Mammary epithelial cell (primary cell): ENCODE measurements at regions of chr18 and their contacts with region 1.

Region 1: GRCh38 chr18:9913526-9914333 is at the start of gene VAPA:
- DNase-seq: peak; percentile 97
- H3K4me3 ChIP-seq: peak within 1 kb of the TSS; percentile 94 to 99 (median 95)
- H3K27ac ChIP-seq: peak within 1 kb of the TSS; percentile 98
- H3K4me1 ChIP-seq: peaks cover 27% of the 10 kb centered on the region
- H3K27me3 ChIP-seq: no peaks in the 10 kb centered on the region
- CTCF ChIP-seq: no peak
- total RNA-seq, gene VAPA: 199 to 223 TPM

Region 2: GRCh38 chr18:9575558-9575957 is 338.2 kb before region 1 on chr18:
- CTCF ChIA-PET with region 1: no interaction called
- dilution Hi-C with region 1: no loop called
- in situ Hi-C with region 1: loop called (anchors 25 kb)
- intact Hi-C with region 1: loop called (anchors 10 kb)
- DNase-seq: peak; percentile 74
- H3K4me3 ChIP-seq: no peak overlapping the region
- H3K27ac ChIP-seq: peak overlapping the region; percentile 34
- H3K4me1 ChIP-seq: peaks cover 5% of the 10 kb centered on the region
- H3K27me3 ChIP-seq: no peaks in the 10 kb centered on the region
- CTCF ChIP-seq: peak; percentile 89 to 99

Region 3: DNA sequence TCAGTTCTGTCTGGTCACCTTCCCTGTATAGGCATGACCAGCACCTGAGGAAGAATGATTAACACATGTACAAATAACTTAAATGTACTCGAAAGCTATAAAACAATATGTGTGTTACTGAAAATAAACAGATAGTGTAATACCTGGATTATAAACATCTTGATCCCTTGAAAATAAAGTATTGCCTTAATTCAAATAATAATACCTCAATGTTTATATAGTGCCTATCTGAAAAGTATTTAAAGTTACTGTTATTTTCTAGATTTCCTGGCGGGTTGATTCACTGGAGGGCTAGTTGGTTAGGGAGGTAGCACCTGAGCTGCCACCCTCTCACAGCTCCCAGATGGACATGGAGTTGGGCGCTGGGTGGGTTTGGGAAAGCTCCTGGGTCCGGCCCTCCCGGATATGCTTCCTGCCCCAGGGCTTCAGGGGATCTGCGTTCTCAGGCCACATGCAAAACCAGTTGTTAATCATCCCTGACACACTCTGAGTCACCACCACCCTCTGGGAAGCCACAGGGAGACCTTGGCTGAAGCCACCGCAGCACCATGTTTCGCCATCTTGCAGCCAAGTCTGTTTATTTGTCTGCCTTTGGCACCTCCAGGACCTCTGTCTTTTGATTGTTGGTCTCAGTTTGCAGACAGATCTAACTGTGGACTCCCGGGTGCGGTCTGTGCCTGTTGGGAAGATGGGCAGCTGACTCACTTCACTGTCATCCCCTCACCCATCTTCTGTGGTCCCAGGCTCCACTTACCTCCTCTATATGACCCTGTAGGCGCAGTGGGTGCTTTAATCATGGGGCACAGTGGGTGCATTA is 170.3 kb before region 1 on chr18:
- CTCF ChIA-PET with region 1: no interaction called
- dilution Hi-C with region 1: no loop called
- in situ Hi-C with region 1: no loop called
- intact Hi-C with region 1: loop called (anchors 5 kb)
- DNase-seq: peak; percentile 95
- H3K4me3 ChIP-seq: peak overlapping the region in 1 of 3 experiments; percentile 14
- H3K27ac ChIP-seq: peak overlapping the region; percentile 78
- H3K4me1 ChIP-seq: peaks cover 32% of the 10 kb centered on the region
- H3K27me3 ChIP-seq: no peaks in the 10 kb centered on the region
- CTCF ChIP-seq: no peak

Region 4: DNA sequence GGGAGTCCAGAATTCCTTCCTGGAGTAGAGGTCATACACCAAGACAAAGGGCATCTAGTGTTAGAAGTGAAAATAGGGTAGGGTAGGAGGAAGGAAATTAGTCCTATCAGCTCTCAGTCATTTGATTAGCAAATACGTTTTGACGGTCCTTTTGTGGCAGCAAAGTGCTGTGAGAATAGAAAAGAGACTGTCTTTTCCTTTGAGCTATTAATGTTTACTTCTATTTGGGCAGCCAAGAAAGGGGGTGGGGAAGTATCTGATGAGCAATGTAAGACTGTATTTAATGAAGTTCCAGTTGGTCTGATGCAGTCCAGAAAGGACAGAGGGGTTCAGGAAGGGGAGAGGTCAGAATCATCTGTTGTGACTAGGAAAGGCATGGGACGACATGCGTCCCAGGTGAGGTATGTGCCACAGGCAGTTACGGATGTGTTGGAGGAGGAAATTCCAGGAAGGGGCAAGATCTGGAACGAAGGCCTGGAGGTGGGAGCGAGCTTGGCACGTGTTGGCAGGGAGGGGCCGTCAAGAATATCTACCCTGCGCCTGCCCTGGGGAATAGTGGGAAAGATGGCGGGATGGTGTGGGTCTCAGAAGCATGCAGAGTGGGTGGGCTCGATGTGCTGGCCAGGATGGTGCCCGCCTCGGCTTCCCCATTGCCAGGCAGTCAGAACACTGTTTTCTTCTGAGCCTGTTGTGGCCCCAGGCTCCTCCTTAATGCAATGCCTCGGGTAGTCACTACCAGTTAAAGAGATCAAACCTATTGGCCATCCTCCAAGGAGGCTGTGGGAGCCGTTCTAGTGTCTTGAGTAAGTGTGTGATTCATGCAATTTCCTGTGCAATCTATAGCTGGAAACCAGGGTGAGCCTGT is 85.9 kb before region 1 on chr18:
- CTCF ChIA-PET with region 1: no interaction called
- dilution Hi-C with region 1: no loop called
- in situ Hi-C with region 1: no loop called
- intact Hi-C with region 1: loop called (anchors 2 kb)
- DNase-seq: peak; percentile 98
- H3K4me3 ChIP-seq: peak overlapping the region in 2 of 3 experiments; percentile 40 to 41
- H3K27ac ChIP-seq: peak overlapping the region; percentile 77
- H3K4me1 ChIP-seq: peaks cover 54% of the 10 kb centered on the region
- H3K27me3 ChIP-seq: no peaks in the 10 kb centered on the region
- CTCF ChIP-seq: no peak

Region 5: GRCh38 chr18:9869715-9870430 is 43.9 kb before region 1 on chr18:
- CTCF ChIA-PET with region 1: no interaction called
- dilution Hi-C with region 1: loop called (anchors 5 kb)
- in situ Hi-C with region 1: no loop called
- intact Hi-C with region 1: loop called (anchors 2 kb)
- DNase-seq: peak; percentile 63
- H3K4me3 ChIP-seq: no peak overlapping the region
- H3K27ac ChIP-seq: no peak overlapping the region
- H3K4me1 ChIP-seq: peaks cover 26% of the 10 kb centered on the region
- H3K27me3 ChIP-seq: no peaks in the 10 kb centered on the region
- CTCF ChIP-seq: no peak

Region 6: DNA sequence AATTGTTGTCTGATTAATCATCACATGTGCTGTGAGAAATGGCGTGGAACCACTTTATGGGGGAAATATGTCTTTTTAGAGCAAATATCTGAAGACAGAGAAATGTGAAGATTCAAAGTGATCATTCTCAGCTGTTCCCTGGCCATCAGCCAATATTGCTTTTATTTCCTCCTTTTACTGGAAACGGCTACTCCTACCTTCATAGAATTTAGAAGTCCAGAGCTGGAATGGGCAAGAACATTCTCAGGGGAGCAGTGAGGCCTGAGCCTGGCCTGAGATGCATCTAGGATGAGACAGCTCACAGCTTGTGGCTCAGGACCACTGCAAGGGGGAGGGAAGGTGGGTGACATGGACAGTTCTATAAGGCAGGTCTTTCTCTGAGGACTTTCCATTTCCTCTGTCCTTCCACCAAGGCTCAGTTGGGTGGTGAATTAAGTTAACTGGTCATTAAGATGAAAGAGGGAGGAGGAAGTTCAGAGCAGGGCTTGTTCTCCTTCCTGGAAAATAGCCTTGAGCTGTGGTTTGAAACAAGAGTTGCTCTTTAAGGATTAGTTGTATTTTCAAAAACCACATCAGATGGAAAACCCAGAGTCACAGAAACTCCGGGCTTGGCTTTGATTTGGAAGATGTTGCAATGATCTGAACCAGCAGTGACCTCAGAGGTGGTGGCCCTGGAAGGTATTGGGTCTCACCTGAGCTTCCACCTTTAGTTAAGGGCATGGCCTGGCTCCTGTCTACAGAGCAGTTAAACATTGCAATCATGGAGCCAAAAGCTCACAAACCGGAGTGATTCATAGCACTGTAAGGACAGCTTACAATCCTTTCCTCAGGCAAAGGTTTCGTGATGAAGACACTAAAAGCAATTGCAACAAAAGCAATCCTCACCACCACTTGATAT is 144.4 kb after region 1 on chr18:
- CTCF ChIA-PET with region 1: no interaction called
- dilution Hi-C with region 1: no loop called
- in situ Hi-C with region 1: no loop called
- intact Hi-C with region 1: no loop called
- DNase-seq: peak; percentile 82
- H3K4me3 ChIP-seq: no peak overlapping the region
- H3K27ac ChIP-seq: no peak overlapping the region
- H3K4me1 ChIP-seq: peaks cover 16% of the 10 kb centered on the region
- H3K27me3 ChIP-seq: no peaks in the 10 kb centered on the region
- CTCF ChIP-seq: no peak

Region 7: GRCh38 chr18:10101729-10102128 is 188.0 kb after region 1 on chr18:
- CTCF ChIA-PET with region 1: no interaction called
- dilution Hi-C with region 1: no loop called
- in situ Hi-C with region 1: no loop called
- intact Hi-C with region 1: no loop called
- DNase-seq: no peak
- H3K4me3 ChIP-seq: no peak overlapping the region
- H3K27ac ChIP-seq: no peak overlapping the region
- H3K4me1 ChIP-seq: no peaks in the 10 kb centered on the region
- H3K27me3 ChIP-seq: peaks cover 3% of the 10 kb centered on the region
- CTCF ChIP-seq: no peak

Region 8: DNA sequence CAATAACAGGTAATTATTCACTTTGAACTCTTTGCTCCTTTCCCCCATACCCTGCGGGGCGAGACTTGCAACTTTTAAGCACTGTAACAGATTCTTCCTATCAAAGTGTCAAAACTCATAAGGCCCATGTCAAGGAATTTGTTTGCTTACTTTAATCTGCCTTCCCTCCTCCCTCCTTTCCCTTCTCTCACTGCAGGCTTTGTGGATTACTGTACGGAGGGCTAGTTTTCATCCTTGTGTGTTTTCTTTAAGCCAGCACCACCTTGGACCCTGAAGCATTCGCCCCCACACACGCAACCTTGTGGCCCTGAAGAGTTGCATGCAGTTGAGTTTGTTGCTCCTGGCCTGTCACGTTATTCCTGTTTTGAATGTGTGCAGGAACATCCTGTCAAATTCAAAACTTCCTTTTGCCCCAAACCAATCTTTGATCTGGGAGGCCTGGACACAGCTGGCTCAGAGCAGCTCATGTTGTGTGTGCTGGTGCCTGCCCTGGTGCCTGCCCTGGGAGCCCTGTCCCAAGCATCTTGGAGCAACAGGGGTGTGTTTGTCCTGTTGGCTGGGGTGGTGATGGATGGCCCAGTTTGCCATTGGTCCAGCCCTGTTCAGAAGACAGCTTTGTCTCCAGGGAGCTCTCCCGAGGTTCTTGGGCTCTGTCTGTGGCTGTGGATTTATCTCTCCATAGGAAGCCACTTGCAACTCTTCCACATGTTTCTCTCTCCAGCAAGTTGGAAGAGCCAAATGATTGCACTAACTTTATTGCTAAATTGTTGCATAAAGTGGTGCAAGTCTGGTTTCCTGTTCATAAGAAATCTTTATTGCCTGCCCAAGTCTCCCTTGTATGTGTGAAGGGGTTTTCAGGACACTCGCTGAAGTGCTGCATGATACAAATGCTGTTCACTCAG is 199.6 kb after region 1 on chr18:
- CTCF ChIA-PET with region 1: no interaction called
- dilution Hi-C with region 1: no loop called
- in situ Hi-C with region 1: no loop called
- intact Hi-C with region 1: no loop called
- DNase-seq: no peak
- H3K4me3 ChIP-seq: no peak overlapping the region
- H3K27ac ChIP-seq: no peak overlapping the region
- H3K4me1 ChIP-seq: no peaks in the 10 kb centered on the region
- H3K27me3 ChIP-seq: no peaks in the 10 kb centered on the region
- CTCF ChIP-seq: no peak

Region 9: DNA sequence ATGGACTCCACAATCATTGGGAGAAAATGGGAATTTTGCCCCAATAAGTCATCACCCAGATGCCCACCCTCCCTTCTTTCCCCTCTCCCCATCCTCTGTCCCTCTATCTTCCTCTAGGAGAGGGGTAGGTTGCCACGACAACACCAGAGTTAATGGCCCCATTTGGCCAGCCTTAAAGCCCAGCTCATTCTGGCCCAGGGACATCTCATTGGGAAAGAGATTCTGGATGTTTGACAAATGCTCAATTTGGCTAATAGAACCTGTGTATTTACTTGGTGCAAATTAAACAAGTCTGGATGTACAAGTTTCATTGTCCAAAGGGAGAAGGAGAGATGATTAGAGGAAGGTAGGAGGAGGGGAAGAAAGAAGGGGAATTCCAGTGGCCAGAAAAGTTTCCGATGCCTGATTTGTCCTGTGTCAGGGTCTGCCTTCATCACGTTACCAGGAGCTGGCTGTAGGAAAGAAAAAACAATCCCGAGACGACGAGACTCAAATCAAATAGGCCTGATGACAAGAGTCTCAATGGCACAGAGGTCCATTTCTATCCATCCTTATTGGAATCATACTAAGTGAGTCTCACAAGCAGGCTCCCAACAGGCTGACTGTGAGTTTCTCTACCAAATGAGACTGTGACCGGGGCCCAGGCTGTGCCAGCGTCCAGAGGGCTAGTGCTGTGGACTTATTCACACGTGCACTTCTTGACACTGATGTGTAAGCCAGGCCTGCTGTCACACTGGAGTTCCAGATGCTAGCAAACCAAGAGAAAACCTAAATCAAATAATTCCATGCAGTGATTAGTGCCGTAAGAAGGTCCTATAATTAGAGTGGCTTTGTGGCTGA is 275.5 kb after region 1 on chr18:
- CTCF ChIA-PET with region 1: no interaction called
- dilution Hi-C with region 1: no loop called
- in situ Hi-C with region 1: no loop called
- intact Hi-C with region 1: no loop called
- DNase-seq: no peak
- H3K4me3 ChIP-seq: no peak overlapping the region
- H3K27ac ChIP-seq: no peak overlapping the region
- H3K4me1 ChIP-seq: no peaks in the 10 kb centered on the region
- H3K27me3 ChIP-seq: peaks cover 2% of the 10 kb centered on the region
- CTCF ChIP-seq: no peak